ENCODE measurements at regions of chr12 and their contacts with region 1.

Region 1: GRCh38 chr12:101719546-101719945 is 19.7 kb downstream of the SYCP3 start:
- DNase-seq: no peak
- ATAC-seq: no peak
- H3K4me3 Mint-ChIP-seq: no peak overlapping the region
- H3K27ac Mint-ChIP-seq: no peak overlapping the region
- H3K4me1 Mint-ChIP-seq: no peaks in the 10 kb centered on the region
- H3K27me3 Mint-ChIP-seq: no peaks in the 10 kb centered on the region

Region 2: GRCh38 chr12:101379149-101379548 is 340.4 kb before region 1 on chr12:
- CTCF ChIA-PET with region 1: no interaction called
- POLR2A ChIA-PET with region 1: interaction called, 10 read pairs
- intact Hi-C with region 1: no loop called
- DNase-seq: no peak
- ATAC-seq: no peak
- H3K4me3 Mint-ChIP-seq: no peak overlapping the region
- H3K27ac Mint-ChIP-seq: no peak overlapping the region
- H3K4me1 Mint-ChIP-seq: peaks cover 7% of the 10 kb centered on the region
- H3K27me3 Mint-ChIP-seq: no peaks in the 10 kb centered on the region

Region 3: GRCh38 chr12:101628676-101629075 is 90.9 kb before region 1 on chr12:
- CTCF ChIA-PET with region 1: no interaction called
- POLR2A ChIA-PET with region 1: no interaction called
- intact Hi-C with region 1: no loop called
- DNase-seq: no peak
- ATAC-seq: no peak
- H3K4me3 Mint-ChIP-seq: no peak overlapping the region
- H3K27ac Mint-ChIP-seq: no peak overlapping the region
- H3K4me1 Mint-ChIP-seq: no peaks in the 10 kb centered on the region
- H3K27me3 Mint-ChIP-seq: peaks cover 6% of the 10 kb centered on the region